IMR-90 (cell line): ENCODE measurements at regions of chr15 and their contacts with region 1.

Region 1: DNA sequence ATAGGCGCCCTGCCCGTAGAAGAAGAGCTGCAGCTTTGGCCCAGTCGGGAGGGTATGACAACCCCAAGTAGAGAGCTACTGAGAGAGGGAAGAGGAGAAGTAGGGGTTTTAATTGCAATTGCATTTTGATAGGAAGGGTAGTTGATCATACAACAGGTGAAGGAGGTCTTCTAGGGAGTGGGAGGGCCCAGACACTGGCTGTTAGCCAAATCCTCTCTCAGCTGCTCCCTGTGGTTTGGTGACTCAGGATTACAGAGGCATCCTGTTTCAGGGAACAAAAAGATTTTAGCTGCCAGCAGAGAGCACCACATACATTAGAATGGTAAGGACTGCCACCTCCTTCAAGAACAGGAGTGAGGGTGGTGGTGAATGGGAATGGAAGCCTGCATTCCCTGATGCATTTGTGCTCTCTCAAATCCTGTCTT is 408.9 kb upstream of the THBS1 start:
- DNase-seq: peak; percentile 99
- ATAC-seq: peak; percentile 91
- H3K4me3 ChIP-seq: no peak overlapping the region
- H3K27ac ChIP-seq: peak overlapping the region; percentile 91
- H3K4me1 ChIP-seq: peaks cover 14% of the 10 kb centered on the region
- H3K27me3 ChIP-seq: no peaks in the 10 kb centered on the region
- CTCF ChIP-seq: peak; percentile 86
- POLR2A ChIP-seq: peak; percentile 48
- RAD21 ChIP-seq: peak; percentile 99

Region 2: GRCh38 chr15:38758043-38758442 is 413.9 kb before region 1 on chr15:
- CTCF ChIA-PET with region 1: no interaction called
- POLR2A ChIA-PET with region 1: no interaction called
- dilution Hi-C with region 1: no loop called
- in situ Hi-C with region 1: no loop called
- intact Hi-C with region 1: no loop called
- DNase-seq: peak; percentile 76
- ATAC-seq: peak; percentile 95
- H3K4me3 ChIP-seq: no peak overlapping the region
- H3K27ac ChIP-seq: no peak overlapping the region
- H3K4me1 ChIP-seq: peaks cover 4% of the 10 kb centered on the region
- H3K27me3 ChIP-seq: peaks cover 10% of the 10 kb centered on the region
- CTCF ChIP-seq: no peak
- POLR2A ChIP-seq: no peak
- RAD21 ChIP-seq: no peak

Region 3: GRCh38 chr15:38817427-38818156 is 354.4 kb before region 1 on chr15:
- CTCF ChIA-PET with region 1: interaction called, 3 read pairs
- POLR2A ChIA-PET with region 1: no interaction called
- dilution Hi-C with region 1: no loop called
- in situ Hi-C with region 1: loop called (anchors 5 kb)
- intact Hi-C with region 1: loop called (anchors 1 kb)
- DNase-seq: peak; percentile 48
- ATAC-seq: peak; percentile 97
- H3K4me3 ChIP-seq: no peak overlapping the region
- H3K27ac ChIP-seq: peak overlapping the region; percentile 26
- H3K4me1 ChIP-seq: peaks cover 8% of the 10 kb centered on the region
- H3K27me3 ChIP-seq: no peaks in the 10 kb centered on the region
- CTCF ChIP-seq: peak; percentile 98
- POLR2A ChIP-seq: no peak
- RAD21 ChIP-seq: peak; percentile 95

Region 4: GRCh38 chr15:38996111-38996631 is 175.8 kb before region 1 on chr15:
- CTCF ChIA-PET with region 1: no interaction called
- POLR2A ChIA-PET with region 1: no interaction called
- dilution Hi-C with region 1: no loop called
- in situ Hi-C with region 1: no loop called
- intact Hi-C with region 1: loop called (anchors 2 kb)
- DNase-seq: peak; percentile 90
- ATAC-seq: peak; percentile 74
- H3K4me3 ChIP-seq: no peak overlapping the region
- H3K27ac ChIP-seq: peak overlapping the region; percentile 99; the same call in 1 of the 2 replicates
- H3K4me1 ChIP-seq: peaks cover 28% of the 10 kb centered on the region
- H3K27me3 ChIP-seq: no peaks in the 10 kb centered on the region
- CTCF ChIP-seq: no peak
- POLR2A ChIP-seq: no peak
- RAD21 ChIP-seq: no peak

Region 5: DNA sequence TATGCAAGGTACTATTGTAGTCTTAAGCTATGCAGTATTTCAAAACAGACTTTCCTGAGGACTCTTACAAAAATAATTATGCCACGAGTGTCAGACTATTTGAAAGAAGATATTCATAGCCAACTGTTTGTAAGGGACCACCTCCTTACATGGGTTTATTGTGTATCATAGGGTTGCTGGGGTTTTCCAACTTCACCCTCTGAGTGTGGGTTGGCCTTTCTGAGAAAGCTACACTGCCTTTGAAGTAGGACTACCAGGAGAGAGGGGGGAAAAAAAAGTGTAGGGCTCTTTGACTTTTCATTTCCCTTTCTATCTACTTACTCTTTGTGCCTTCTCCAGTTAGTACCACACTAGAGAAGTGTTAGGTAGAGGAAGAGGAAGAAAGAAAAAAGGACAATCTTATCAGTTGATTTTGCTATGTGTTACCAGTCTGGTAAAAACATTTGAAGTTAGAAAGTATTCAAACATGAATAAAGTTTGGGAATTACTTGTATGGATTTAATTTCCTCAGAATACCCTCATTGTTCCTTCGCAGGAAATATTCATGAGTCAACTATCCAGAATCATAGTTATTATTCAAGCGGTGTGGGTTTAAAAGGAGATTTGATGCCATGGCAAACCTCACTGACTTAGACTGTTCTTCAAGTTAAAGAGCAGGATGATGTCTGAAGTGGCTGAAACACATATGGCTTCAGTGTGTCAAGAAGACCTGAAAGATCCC is 79.6 kb after region 1 on chr15:
- CTCF ChIA-PET with region 1: no interaction called
- POLR2A ChIA-PET with region 1: no interaction called
- dilution Hi-C with region 1: no loop called
- in situ Hi-C with region 1: no loop called
- intact Hi-C with region 1: no loop called
- DNase-seq: peak; percentile 60
- ATAC-seq: peak; percentile 60
- H3K4me3 ChIP-seq: no peak overlapping the region
- H3K27ac ChIP-seq: 0 out of 2 replicates have a peak overlapping the region, but pooled peaks have one; percentile 13
- H3K4me1 ChIP-seq: peaks cover 14% of the 10 kb centered on the region
- H3K27me3 ChIP-seq: no peaks in the 10 kb centered on the region
- CTCF ChIP-seq: no peak
- POLR2A ChIP-seq: no peak
- RAD21 ChIP-seq: no peak

Region 6: GRCh38 chr15:39301589-39301999 is 129.6 kb after region 1 on chr15:
- CTCF ChIA-PET with region 1: interaction called, 4 read pairs
- POLR2A ChIA-PET with region 1: interaction called, 3 read pairs
- dilution Hi-C with region 1: no loop called
- in situ Hi-C with region 1: loop called (anchors 5 kb)
- intact Hi-C with region 1: loop called (anchors 2 kb)
- DNase-seq: peak; percentile 77
- ATAC-seq: peak; percentile 7; the same call in 1 of the 2 replicates
- H3K4me3 ChIP-seq: no peak overlapping the region
- H3K27ac ChIP-seq: peak overlapping the region; percentile 96
- H3K4me1 ChIP-seq: peaks cover 24% of the 10 kb centered on the region
- H3K27me3 ChIP-seq: no peaks in the 10 kb centered on the region
- CTCF ChIP-seq: no peak
- POLR2A ChIP-seq: no peak
- RAD21 ChIP-seq: no peak

Region 7: GRCh38 chr15:39511000-39511915 is 339.3 kb after region 1 on chr15:
- CTCF ChIA-PET with region 1: no interaction called
- POLR2A ChIA-PET with region 1: no interaction called
- dilution Hi-C with region 1: no loop called
- in situ Hi-C with region 1: no loop called
- intact Hi-C with region 1: loop called (anchors 2 kb)
- DNase-seq: peak; percentile 93
- ATAC-seq: peak; percentile 97
- H3K4me3 ChIP-seq: no peak overlapping the region; the same call in 1 of the 2 replicates
- H3K27ac ChIP-seq: peak overlapping the region; percentile 70
- H3K4me1 ChIP-seq: peaks cover 18% of the 10 kb centered on the region
- H3K27me3 ChIP-seq: no peaks in the 10 kb centered on the region
- CTCF ChIP-seq: no peak
- POLR2A ChIP-seq: peak; percentile 33; the same call in 1 of the 2 replicates
- RAD21 ChIP-seq: peak; percentile 37

Region 8: GRCh38 chr15:39756806-39757522 is 585.0 kb after region 1 on chr15:
- CTCF ChIA-PET with region 1: no interaction called
- POLR2A ChIA-PET with region 1: no interaction called
- dilution Hi-C with region 1: no loop called
- in situ Hi-C with region 1: loop called (anchors 25 kb)
- intact Hi-C with region 1: loop called (anchors 10 kb)
- DNase-seq: peak; percentile 83
- ATAC-seq: peak; percentile 35; the same call in 1 of the 2 replicates
- H3K4me3 ChIP-seq: no peak overlapping the region
- H3K27ac ChIP-seq: no peak overlapping the region
- H3K4me1 ChIP-seq: no peaks in the 10 kb centered on the region
- H3K27me3 ChIP-seq: no peaks in the 10 kb centered on the region
- CTCF ChIP-seq: peak; percentile 80
- POLR2A ChIP-seq: no peak
- RAD21 ChIP-seq: peak; percentile 76